Activated CD4-positive, alpha-beta memory T cell treated with anti-CD3 and anti-CD28 coated beads for 36 hours (primary cell): ENCODE measurements at regions of chr4 and their contacts with region 1.

Region 1: DNA sequence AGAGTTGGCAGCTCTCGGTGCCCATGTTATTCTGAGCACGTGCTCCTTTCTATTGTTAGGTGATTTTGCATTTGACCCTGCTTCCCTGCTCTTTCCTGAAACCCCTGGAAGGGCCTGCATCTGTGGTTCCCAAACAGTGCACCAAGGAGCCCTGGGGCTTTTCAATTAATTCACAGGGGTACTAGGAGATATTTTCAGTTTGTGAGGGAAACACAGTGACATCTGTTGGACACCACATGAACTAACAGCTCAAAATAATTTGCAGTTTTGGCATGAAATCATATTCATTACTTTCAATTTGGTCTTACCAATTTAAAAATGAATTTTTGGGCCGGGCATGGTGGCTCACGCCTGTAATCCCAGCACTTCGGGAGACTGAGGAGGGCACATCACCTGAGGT is 156.6 kb downstream of the GATB start:
- DNase-seq: no peak
- H3K4me3 Mint-ChIP-seq: no peak overlapping the region
- H3K27ac Mint-ChIP-seq: no peak overlapping the region
- H3K4me1 Mint-ChIP-seq: no peaks in the 10 kb centered on the region
- H3K27me3 Mint-ChIP-seq: no peaks in the 10 kb centered on the region

Region 2: GRCh38 chr4:151355155-151355554 is 249.1 kb before region 1 on chr4:
- CTCF ChIA-PET with region 1: no interaction called
- POLR2A ChIA-PET with region 1: no interaction called
- intact Hi-C with region 1: loop called (anchors 2 kb)
- DNase-seq: no peak
- H3K4me3 Mint-ChIP-seq: no peak overlapping the region
- H3K27ac Mint-ChIP-seq: no peak overlapping the region
- H3K4me1 Mint-ChIP-seq: no peaks in the 10 kb centered on the region
- H3K27me3 Mint-ChIP-seq: peaks cover 5% of the 10 kb centered on the region